ENCODE measurements at regions of chr13 and their contacts with region 1.

Region 1: GRCh38 chr13:32639502-32640105 is 53.4 kb downstream of the PDS5B start:
- DNase-seq: peak; percentile 75 to 81 (median 81)
- H3K4me3 ChIP-seq: no peak overlapping the region
- H3K27ac ChIP-seq: no peak overlapping the region
- H3K4me1 ChIP-seq: peaks cover 2 to 17% (median 12%) of the 10 kb centered on the region in 4 experiments
- H3K27me3 ChIP-seq: no peaks in the 10 kb centered on the region

Region 2: DNA sequence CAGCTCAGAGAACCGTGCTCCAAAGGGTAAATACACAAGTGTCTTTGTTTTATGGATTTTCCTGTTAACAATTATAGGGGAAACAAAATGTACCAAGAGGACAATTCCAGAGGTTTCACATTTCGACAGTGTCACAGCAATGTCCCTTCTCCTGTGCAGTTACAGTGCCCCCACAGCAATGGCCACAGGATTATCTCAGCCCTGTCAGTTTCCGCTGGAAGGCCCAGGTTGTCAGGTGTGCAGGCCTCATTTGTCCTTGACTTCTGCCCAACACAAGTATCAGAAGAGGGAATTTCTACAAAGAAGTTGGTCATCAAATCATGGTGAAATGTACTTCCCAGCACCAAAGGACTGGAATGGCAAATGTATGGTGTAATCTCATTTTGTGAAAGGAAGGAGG is 89.8 kb before region 1 on chr13:
- CTCF ChIA-PET with region 1: no interaction called
- POLR2A ChIA-PET with region 1: no interaction called
- DNase-seq: no peak
- H3K4me3 ChIP-seq: no peak overlapping the region
- H3K27ac ChIP-seq: no peak overlapping the region
- H3K4me1 ChIP-seq: no peaks in the 10 kb centered on the region
- H3K27me3 ChIP-seq: no peaks in the 10 kb centered on the region

Region 3: GRCh38 chr13:32581177-32581786 is 58.3 kb before region 1 on chr13:
- CTCF ChIA-PET with region 1: interaction called, 11 read pairs
- POLR2A ChIA-PET with region 1: interaction called, 5 read pairs
- DNase-seq: peak; percentile 27 to 74 (median 70)
- H3K4me3 ChIP-seq: no peak overlapping the region
- H3K27ac ChIP-seq: no peak overlapping the region
- H3K4me1 ChIP-seq: peaks cover 0 to 7% (median 5%) of the 10 kb centered on the region in 4 experiments
- H3K27me3 ChIP-seq: no peaks in the 10 kb centered on the region

Region 4: DNA sequence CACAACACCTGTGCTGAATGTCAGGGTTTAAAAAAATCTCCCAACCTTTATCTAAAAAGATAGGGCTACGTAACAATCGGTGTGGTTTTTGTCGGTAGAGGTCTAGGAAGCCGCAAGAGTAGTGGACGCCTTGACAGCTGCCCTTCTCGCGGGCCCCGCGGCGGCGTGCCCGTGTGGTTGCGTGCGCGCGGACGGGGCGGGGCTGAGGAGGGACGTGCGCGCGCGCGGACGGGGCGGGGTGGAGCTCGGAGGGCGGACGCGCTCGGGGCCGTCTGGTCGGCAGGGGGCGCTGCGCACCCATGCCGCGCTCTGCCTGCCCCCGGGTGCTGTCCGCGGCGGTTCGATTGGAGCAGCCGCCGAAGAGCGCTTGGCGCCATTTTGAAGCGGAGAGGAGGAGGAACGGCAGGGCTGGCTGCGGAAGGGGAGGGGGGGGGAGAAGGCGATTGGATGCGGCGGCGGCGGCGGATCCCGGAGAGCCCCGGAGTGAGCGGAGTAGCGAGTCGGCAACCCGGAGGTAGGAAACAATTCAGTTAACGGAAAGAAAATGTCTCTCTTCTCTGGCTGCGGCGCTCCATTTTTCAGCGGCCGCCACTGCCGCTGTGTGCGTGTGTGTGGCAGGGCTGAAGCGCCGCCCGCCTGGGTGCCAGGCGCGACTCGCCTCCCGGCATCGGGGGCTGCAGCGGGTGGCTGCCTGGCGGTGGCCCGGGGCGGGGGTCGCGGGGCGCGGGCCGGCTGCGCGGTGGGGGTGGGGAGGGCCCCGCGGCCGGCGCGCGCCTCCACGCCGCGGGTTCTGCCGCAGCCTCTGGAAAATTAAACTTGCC is 53.3 kb before region 1 on chr13 and contains the start of gene PDS5B:
- CTCF ChIA-PET with region 1: interaction called, 45 read pairs
- POLR2A ChIA-PET with region 1: interaction called, 5 read pairs
- DNase-seq: peak; percentile 94 to 97 (median 97)
- H3K4me3 ChIP-seq: peak within 1 kb of the TSS; percentile 92 to 99 (median 97)
- H3K27ac ChIP-seq: peak within 1 kb of the TSS; percentile 78 to 89
- H3K4me1 ChIP-seq: peaks cover 9 to 31% (median 19%) of the 10 kb centered on the region in 4 experiments
- H3K27me3 ChIP-seq: no peaks in the 10 kb centered on the region

Region 5: DNA sequence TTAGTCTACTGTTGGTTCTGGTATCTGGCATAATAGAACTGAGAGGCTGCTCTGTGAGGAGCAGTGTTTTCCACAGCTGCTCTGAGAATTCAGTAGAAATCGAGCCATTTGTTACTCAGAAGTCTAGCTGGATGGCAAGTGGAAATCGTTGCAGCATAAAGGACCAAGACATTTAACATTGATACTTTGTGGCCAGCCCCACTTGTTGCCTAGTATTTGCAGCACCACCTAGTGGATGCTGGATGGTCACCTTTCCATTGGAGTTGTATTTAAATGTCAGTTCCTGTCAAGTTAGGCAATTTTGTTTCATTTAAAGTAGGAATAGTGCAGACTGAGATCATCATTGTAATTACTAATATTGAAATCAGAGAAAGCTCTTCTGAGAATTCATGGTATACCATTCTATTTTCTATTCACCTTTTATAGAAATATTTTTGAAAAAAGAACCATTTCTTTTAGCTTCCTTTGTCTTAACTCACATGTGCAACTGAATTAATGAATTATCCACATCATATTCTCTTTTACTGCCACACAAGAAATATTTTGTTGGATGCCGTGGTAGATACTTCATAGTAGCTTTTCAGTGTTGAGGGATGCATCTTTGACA is 11.2 kb after region 1 on chr13:
- CTCF ChIA-PET with region 1: interaction called, 13 read pairs
- POLR2A ChIA-PET with region 1: interaction called, 3 read pairs
- DNase-seq: peak; percentile 78 to 83 (median 82)
- H3K4me3 ChIP-seq: no peak overlapping the region
- H3K27ac ChIP-seq: no peak overlapping the region
- H3K4me1 ChIP-seq: peaks cover 0 to 11% (median 7%) of the 10 kb centered on the region in 4 experiments
- H3K27me3 ChIP-seq: no peaks in the 10 kb centered on the region

Region 6: DNA sequence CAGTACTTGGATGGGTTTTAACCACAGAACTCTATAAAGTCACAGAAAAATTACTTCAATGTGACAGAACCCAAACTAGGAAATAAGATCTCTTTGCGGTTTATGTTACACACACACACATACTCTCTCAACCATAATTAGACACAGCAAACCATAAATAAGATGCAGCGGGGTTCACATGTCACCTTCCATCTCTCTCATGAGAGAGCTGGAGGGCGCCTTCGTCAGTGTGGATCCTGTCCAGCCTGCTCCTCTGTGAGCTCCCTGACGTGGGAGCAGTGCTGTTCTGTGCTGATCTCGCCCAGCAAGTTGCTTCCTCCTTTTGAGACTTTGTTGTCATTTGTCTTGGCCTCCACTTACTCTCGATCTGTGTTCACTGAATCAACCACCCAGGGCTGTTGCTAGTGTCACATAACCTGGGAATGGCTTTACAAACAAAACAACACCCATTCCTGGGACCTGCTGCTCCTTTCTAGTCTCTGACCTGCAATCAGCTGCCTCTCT is 171.7 kb after region 1 on chr13:
- CTCF ChIA-PET with region 1: no interaction called
- POLR2A ChIA-PET with region 1: no interaction called
- DNase-seq: peak; percentile 53 to 87 (median 80)
- H3K4me3 ChIP-seq: peak overlapping the region in 2 of 7 experiments; percentile 40 to 41
- H3K27ac ChIP-seq: no peak overlapping the region
- H3K4me1 ChIP-seq: peaks cover 4 to 12% (median 10%) of the 10 kb centered on the region in 4 experiments
- H3K27me3 ChIP-seq: no peaks in the 10 kb centered on the region

Region 7: GRCh38 chr13:32824671-32825070 is 185.1 kb after region 1 on chr13:
- CTCF ChIA-PET with region 1: no interaction called
- POLR2A ChIA-PET with region 1: no interaction called
- DNase-seq: no peak
- H3K4me3 ChIP-seq: no peak overlapping the region
- H3K27ac ChIP-seq: no peak overlapping the region
- H3K4me1 ChIP-seq: no peaks in the 10 kb centered on the region
- H3K27me3 ChIP-seq: no peaks in the 10 kb centered on the region